ENCODE measurements at regions of chrX and their contacts with region 1.

Region 1: DNA sequence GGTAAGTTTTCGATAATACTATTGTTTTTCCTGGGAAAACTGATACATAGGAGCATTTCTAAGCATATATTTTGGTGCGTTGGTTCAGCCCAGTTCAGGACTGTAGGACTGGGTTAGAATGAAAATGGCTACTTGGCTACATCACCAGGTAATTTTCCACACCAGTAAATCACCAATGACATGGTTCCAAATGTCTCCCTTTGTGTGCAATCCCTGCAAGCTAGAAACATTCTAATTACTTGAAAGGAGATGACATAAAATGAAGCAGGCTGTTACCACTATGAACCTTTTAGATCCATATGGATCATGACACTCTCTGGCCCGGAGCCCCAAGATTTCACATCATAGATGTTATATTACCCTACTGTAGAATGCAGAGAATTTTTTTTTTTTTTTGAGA is 577.4 kb upstream of the FTHL17 start:
- DNase-seq: no peak
- ATAC-seq: no peak
- H3K4me3 ChIP-seq: no peak overlapping the region
- H3K27ac ChIP-seq: no peak overlapping the region
- H3K4me1 ChIP-seq: no peaks in the 10 kb centered on the region
- H3K27me3 ChIP-seq: no peaks in the 10 kb centered on the region
- CTCF ChIP-seq: no peak
- POLR2A ChIP-seq: no peak

Region 2: DNA sequence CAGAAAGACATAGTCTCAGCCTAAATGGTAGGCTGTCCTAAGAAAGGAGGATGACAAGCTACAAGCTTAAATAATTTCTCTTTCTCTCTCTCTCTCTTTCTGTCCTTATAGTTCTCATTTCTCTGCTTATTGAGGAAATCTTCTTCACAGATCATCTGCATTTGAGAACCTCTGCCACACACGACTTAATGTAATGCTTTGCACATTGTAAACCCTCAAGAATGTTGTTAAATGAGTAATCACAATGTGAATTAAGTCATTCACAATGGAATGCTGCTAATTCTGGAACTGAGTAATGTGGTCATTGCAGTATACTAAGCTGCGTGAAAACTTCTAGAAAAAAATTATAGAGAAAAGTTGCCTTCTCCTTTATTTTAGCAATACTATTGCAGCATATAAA is 68.5 kb before region 1 on chrX:
- in situ Hi-C with region 1: no loop called
- intact Hi-C with region 1: loop called (anchors 10 kb)
- DNase-seq: no peak
- ATAC-seq: no peak
- H3K4me3 ChIP-seq: no peak overlapping the region
- H3K27ac ChIP-seq: no peak overlapping the region
- H3K4me1 ChIP-seq: no peaks in the 10 kb centered on the region
- H3K27me3 ChIP-seq: no peaks in the 10 kb centered on the region
- CTCF ChIP-seq: no peak
- POLR2A ChIP-seq: no peak

Measured in gastrocnemius medialis (tissue), 4 donors.